PC-3 (cell line): ENCODE measurements at regions of chr3 and their contacts with region 1.

Region 1: GRCh38 chr3:146065573-146066006 is 95.4 kb downstream of the PLOD2 start:
- DNase-seq: peak; percentile 82
- ATAC-seq: no peak
- H3K4me3 ChIP-seq: no peak overlapping the region
- H3K27ac ChIP-seq: peak overlapping the region; percentile 63; the same call in 1 of the 2 replicates
- H3K4me1 ChIP-seq: peaks cover 32% of the 10 kb centered on the region
- H3K27me3 ChIP-seq: no peaks in the 10 kb centered on the region
- CTCF ChIP-seq: peak; percentile 73

Region 2: DNA sequence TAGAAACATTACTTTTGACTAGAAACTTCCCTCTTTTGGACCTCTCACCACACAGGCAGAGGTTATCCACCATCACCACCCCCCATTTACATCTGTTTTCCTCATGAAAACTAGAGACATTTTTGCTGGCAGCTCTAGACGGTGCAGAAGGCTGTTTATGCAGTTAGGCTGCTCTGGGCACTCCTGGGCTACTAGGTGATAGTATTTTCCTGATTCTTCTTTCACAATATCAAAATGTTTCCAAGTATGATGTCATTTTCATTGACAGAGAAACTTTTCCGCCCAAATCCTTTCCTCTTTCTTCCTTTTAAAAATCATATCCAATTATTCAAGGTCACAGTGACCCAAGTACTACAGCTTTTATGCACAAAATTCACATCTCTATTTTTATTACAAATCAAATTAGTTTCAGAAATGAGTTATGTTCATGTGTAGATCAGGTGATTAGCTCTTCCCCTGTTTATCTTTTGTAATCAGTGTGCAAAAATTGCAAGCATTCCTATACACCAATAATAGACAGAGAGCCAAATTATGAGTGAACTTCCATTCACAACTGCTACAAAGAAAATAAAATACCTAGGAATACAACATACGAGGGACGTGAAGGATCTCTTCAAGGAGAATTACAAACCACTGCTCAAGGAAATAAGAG is 28.5 kb after region 1 on chr3:
- CTCF ChIA-PET with region 1: no interaction called
- POLR2A ChIA-PET with region 1: no interaction called
- intact Hi-C with region 1: loop called (anchors 2 kb)
- DNase-seq: no peak
- ATAC-seq: no peak
- H3K4me3 ChIP-seq: no peak overlapping the region
- H3K27ac ChIP-seq: no peak overlapping the region
- H3K4me1 ChIP-seq: 0 out of 2 replicates have a peak, but pooled peaks cover 4% of the 10 kb centered on the region
- H3K27me3 ChIP-seq: no peaks in the 10 kb centered on the region
- CTCF ChIP-seq: no peak

Region 3: DNA sequence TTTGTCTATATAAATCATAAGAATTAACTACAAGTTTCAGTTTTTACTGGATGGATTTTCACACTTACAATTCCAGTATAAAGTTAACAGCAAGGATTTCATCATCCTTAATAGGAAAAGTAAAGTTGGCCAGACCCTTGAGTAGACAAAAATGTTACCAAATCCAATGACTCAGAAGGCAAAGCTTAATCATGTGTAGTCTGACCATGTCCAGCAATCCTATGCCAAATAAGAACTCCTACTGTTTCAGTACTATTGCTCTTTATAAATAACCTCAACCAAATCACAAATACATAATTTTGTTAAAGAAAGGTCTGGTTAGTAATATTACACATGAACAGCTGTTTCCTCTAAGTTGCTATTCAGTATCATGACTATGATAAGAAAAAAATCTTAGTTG is 60.4 kb after region 1 on chr3:
- CTCF ChIA-PET with region 1: no interaction called
- POLR2A ChIA-PET with region 1: no interaction called
- intact Hi-C with region 1: loop called (anchors 5 kb)
- DNase-seq: peak; percentile 75
- ATAC-seq: peak; percentile 71
- H3K4me3 ChIP-seq: no peak overlapping the region
- H3K27ac ChIP-seq: no peak overlapping the region
- H3K4me1 ChIP-seq: peaks cover 13% of the 10 kb centered on the region
- H3K27me3 ChIP-seq: no peaks in the 10 kb centered on the region
- CTCF ChIP-seq: no peak

Region 4: GRCh38 chr3:146160964-146161662 is 95.5 kb after region 1 on chr3 and contains the start of gene PLOD2:
- CTCF ChIA-PET with region 1: interaction called, 10 read pairs
- POLR2A ChIA-PET with region 1: interaction called, 6 read pairs
- intact Hi-C with region 1: loop called (anchors 1 kb)
- DNase-seq: peak; percentile 97
- ATAC-seq: peak; percentile 57
- H3K4me3 ChIP-seq: peak within 1 kb of the TSS; percentile 79
- H3K27ac ChIP-seq: peak within 1 kb of the TSS; percentile 89
- H3K4me1 ChIP-seq: peaks cover 70% of the 10 kb centered on the region
- H3K27me3 ChIP-seq: no peaks in the 10 kb centered on the region
- CTCF ChIP-seq: no peak
- total RNA-seq, gene PLOD2: 76.1 and 84.8 TPM in 2 replicates

Region 5: DNA sequence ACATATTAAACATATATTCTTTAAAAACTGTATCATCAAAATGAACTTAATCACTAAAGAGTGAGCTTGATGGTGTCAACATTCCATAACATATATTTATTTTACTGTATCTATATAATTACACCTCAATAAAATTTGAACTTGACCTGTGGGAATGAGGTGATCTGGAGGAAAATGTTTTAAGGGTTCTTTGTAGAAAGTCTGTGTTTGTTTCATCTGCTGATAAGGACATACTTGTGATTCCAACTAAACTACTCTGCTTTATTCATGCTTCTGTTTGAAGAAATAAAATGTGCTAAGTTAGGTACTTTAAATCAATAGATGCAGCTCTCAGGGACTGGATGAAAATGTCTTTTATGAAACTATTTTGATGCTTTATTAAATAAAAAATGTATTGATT is 107.0 kb after region 1 on chr3:
- CTCF ChIA-PET with region 1: no interaction called
- POLR2A ChIA-PET with region 1: no interaction called
- intact Hi-C with region 1: no loop called
- DNase-seq: no peak
- ATAC-seq: no peak
- H3K4me3 ChIP-seq: no peak overlapping the region
- H3K27ac ChIP-seq: no peak overlapping the region
- H3K4me1 ChIP-seq: peaks cover 20% of the 10 kb centered on the region
- H3K27me3 ChIP-seq: no peaks in the 10 kb centered on the region
- CTCF ChIP-seq: no peak

Region 6: DNA sequence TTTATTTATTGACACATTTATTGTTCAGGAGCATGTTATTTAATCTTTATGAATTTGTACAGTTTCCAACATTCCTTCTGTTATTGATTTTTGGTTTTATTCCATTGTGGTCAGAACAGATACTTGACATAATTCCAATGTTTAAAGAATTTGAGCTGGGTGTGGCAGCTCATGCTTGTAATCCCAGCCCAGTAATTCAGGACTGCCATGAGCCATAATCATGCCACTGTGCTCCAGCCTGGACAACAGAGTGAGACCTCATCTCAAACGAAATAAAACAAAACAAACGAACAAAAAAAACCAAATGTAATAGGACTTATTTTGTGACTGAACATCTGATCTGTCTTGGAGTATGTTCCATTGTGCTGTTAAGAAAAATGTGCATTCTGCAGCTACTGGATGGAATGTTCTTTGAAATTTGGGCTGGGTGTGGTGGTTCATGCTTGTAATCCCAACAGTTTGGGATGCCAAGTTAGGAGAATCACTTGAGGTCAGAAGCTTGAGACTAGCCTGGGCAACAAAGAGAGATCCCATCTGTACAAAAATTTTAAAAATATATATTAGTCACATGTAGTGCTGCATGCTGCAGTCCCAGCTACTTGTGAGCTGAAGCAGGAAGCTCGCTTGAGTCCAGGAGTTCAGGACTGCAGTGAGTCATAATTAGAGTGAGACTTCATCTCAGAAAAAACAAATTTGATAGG is 248.0 kb after region 1 on chr3:
- CTCF ChIA-PET with region 1: no interaction called
- POLR2A ChIA-PET with region 1: no interaction called
- intact Hi-C with region 1: loop called (anchors 5 kb)
- DNase-seq: peak; percentile 88
- ATAC-seq: peak; percentile 91
- H3K4me3 ChIP-seq: 0 out of 2 replicates have a peak overlapping the region, but pooled peaks have one; percentile 22
- H3K27ac ChIP-seq: peak overlapping the region; percentile 90
- H3K4me1 ChIP-seq: peaks cover 34% of the 10 kb centered on the region
- H3K27me3 ChIP-seq: no peaks in the 10 kb centered on the region
- CTCF ChIP-seq: no peak

Region 7: DNA sequence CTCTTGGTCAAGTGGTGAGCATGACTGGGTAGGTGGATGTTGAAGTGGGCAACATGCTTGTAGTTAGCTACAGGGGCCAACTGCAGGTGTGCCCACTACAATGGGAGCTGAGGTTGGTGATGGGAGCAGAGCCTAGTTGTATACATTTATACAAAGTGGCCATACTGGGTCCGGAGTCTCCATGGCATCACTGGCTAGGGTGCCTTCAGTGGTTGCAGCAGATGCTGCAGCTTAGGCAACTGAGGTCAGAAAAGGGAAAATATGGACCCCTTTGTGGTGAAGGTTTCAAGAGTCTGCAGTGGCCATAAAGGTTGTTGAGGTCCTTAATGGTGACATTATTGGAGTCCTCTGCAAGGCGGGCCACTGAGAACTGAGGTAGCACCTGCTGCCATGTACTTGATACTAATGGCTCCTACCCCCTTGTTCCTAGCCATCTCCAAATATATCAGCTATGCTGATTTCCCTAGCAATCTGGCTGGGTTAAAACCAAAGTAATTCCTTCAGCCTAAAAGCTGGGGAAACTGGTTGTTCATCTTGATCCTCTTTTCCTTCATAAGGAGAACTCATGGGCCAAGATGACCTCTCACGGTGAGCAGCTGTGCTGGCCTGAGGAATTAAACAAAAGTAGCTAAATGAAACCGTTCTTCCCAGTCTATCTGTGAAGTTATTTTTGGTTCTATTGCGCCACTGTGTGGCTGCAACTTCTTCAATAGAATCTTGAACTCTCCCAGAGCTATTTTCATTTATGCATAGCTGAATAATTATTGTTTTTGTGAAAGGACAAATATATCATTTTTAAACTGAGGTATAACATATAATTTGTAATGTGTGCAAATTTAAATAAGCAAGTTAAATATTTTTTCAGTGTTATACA is 261.3 kb after region 1 on chr3:
- CTCF ChIA-PET with region 1: interaction called, 4 read pairs
- POLR2A ChIA-PET with region 1: no interaction called
- intact Hi-C with region 1: loop called (anchors 1 kb)
- DNase-seq: peak; percentile 84
- ATAC-seq: peak; percentile 96
- H3K4me3 ChIP-seq: no peak overlapping the region
- H3K27ac ChIP-seq: no peak overlapping the region
- H3K4me1 ChIP-seq: no peaks in the 10 kb centered on the region
- H3K27me3 ChIP-seq: no peaks in the 10 kb centered on the region
- CTCF ChIP-seq: peak; percentile 91

Region 8: DNA sequence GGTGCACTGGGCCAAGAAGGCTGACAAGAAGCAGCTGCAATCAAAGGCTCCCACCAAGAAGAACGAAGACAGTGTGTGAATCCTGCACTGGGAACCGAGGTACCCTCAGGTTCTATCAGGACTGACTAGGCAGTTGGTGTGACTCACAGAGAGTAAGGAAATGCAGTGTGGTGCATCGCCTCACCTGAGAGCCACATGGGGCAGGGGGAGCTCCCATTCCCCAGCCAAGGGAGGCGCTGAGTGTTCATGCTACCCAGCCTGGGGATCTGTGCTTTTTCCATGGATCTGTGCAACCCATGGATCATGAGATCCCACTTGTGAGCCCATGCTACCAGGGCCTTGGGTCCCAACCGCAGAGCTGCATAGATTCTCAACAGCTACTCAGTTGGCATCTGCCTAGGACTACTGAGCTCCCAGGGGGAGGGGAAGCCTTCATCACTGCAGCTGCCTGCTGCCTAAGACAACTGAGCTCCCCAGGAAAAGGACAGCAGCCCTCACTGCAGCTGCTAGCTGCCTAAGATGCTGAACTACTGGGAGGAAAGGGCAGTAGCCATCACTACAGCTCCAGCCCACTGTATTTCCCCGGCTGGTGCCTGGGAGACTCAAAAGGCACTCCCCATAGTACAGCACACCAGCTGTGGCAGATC is 410.6 kb after region 1 on chr3:
- CTCF ChIA-PET with region 1: no interaction called
- POLR2A ChIA-PET with region 1: no interaction called
- intact Hi-C with region 1: no loop called
- DNase-seq: no peak
- ATAC-seq: no peak
- H3K4me3 ChIP-seq: no peak overlapping the region
- H3K27ac ChIP-seq: no peak overlapping the region
- H3K4me1 ChIP-seq: no peaks in the 10 kb centered on the region
- H3K27me3 ChIP-seq: no peaks in the 10 kb centered on the region
- CTCF ChIP-seq: no peak